Right cardiac atrium (tissue), 5 donors: ENCODE measurements at regions of chr6 and their contacts with region 1.

Region 1: GRCh38 chr6:163413345-163414116 is 987 bp upstream of the QKI start:
- DNase-seq: peak; percentile 88 to 96 (median 96)
- ATAC-seq: peak; percentile 92 to 93
- H3K4me3 ChIP-seq: peak overlapping the region; percentile 100
- H3K27ac ChIP-seq: peak overlapping the region; percentile 99
- H3K4me1 ChIP-seq: no peaks in the 10 kb centered on the region
- H3K27me3 ChIP-seq: no peaks in the 10 kb centered on the region

Region 2: DNA sequence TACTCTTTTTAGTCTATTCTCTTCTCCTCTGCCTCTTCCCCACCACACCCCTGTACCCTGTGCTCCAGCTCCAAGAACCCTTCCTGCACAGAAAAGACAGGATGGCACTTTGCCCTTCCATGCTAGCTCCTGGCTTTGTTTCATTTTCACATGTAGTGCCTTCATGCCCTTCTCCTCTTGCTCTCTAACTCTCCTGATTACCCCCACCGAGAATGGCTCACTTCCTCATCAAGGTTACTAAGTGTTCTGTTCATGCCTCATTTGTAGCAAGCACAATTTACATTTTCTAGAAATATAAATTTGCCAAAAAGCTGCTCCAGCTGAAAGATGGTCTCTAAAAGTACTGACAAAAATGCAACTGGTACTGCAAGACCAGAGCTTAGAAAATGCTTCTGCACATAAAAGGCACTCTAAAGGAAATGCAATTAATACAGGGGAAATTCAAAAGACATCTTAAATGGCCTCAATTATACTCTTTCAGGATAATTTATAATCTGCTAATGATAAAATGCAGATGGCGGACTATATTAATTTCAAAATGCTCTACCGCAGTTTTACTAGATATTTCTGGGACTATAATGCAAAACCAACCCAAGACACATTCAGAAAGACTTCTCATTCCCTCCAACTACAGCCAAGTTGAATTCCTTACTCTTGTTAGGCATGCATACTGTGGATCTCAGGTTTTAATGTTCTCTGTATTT is 1256.2 kb before region 1 on chr6:
- intact Hi-C with region 1: no loop called
- DNase-seq: no peak
- ATAC-seq: no peak
- H3K4me3 ChIP-seq: no peak overlapping the region
- H3K27ac ChIP-seq: no peak overlapping the region
- H3K4me1 ChIP-seq: no peaks in the 10 kb centered on the region
- H3K27me3 ChIP-seq: no peaks in the 10 kb centered on the region

Region 3: GRCh38 chr6:162856885-162857284 is 556.6 kb before region 1 on chr6:
- intact Hi-C with region 1: loop called in 1 of 4 experiments (anchors 10 kb)
- DNase-seq: no peak
- ATAC-seq: peak; percentile 82 to 86
- H3K4me3 ChIP-seq: peak overlapping the region; percentile 53
- H3K27ac ChIP-seq: peak overlapping the region; percentile 39
- H3K4me1 ChIP-seq: no peaks in the 10 kb centered on the region
- H3K27me3 ChIP-seq: no peaks in the 10 kb centered on the region

Region 4: GRCh38 chr6:163338671-163339405 is 74.7 kb before region 1 on chr6:
- intact Hi-C with region 1: loop called in 3 of 4 experiments (anchors 5 to 10 kb)
- DNase-seq: peak in 2 of 3 donors; percentile 58 to 70
- ATAC-seq: peak; percentile 40 to 60
- H3K4me3 ChIP-seq: no peak overlapping the region
- H3K27ac ChIP-seq: peak overlapping the region; percentile 90
- H3K4me1 ChIP-seq: peaks cover 31% of the 10 kb centered on the region
- H3K27me3 ChIP-seq: no peaks in the 10 kb centered on the region

Region 5: DNA sequence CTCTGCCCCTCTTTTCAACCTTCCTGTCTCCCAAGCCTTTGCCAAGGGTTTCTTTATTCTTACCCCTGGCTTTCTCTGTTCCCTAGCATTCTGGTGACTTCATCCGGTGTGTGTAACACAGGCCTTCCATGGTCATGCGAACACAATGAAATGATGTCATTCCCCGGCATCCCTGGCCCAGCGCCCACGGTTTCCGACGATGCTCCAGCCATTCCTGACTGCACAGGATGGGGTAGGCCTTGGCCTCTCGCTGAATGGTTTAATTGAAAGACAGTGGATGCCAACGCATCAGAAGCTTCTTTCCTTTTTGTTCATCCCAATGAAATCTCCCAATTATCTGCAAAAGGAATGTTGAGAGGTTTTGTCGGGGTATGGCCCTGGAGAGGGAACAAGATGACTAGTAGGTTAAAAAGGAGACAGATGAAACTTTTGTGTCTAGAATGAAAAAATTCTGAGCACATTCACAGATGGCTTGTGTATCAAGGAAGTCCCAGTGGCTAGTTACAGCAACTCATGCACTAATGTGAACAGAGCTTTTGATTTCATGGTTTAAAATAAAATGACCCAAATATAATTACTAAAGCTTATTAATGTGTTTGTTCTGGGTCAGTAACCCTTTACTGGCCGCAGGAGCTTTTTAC is 655.9 kb after region 1 on chr6:
- intact Hi-C with region 1: no loop called
- DNase-seq: peak; percentile 53 to 79 (median 77)
- ATAC-seq: peak; percentile 51 to 87
- H3K4me3 ChIP-seq: no peak overlapping the region
- H3K27ac ChIP-seq: peak overlapping the region; percentile 66
- H3K4me1 ChIP-seq: no peaks in the 10 kb centered on the region
- H3K27me3 ChIP-seq: no peaks in the 10 kb centered on the region